ENCODE measurements at regions of chr18 and their contacts with region 1.

Region 1: DNA sequence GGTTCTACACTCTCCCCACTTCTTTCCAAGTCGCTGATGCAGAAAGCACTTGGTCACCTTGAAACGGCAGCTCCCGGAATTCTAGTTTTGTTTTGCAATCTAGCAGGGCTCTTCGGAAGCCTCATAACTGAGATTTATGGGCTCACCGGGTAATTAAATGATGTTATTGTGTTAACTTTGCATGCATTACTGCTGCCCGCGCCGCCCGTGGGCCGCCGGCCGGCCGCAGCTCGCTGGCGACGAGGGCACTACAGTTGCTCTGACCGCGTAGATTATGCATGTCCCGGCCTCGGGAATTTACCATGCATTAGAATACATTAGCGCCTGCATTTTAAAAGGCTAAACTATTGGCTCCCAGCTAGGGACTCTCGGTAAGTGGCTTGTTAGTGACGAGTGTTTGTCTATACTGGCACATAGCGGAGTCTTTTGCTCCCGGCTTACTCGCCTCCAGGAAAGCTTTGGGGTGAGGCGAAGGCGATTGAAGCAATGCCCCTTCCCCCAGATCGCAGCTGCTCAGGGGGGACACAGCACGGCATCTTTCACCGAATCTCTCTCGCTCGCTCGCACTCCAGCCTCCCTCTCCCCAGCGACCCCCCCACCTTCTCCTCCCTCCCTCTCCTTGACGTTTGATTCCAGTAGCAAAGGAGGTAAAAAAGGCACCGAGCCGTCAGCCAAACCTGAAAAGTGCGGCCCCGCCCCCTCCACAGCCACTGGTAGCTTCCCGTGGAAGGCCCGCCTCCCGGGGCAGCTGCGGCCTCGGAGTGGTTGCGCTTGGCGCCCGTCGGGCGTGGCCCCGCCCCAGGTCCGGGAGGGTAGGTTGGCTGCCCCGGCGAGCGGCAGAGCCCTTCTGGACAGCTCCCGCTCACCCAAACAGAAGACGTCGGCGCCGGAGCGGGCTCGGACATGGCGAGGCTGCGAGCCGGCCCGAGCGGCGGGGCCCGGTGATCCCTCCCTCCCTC is at the start of gene ONECUT2:
- DNase-seq: peak; percentile 89
- ATAC-seq: peak; percentile 89
- H3K4me3 Mint-ChIP-seq: peak within 1 kb of the TSS; percentile 64
- H3K27ac Mint-ChIP-seq: no peak within 1 kb of the TSS
- H3K4me1 Mint-ChIP-seq: peaks cover 53% of the 10 kb centered on the region
- H3K27me3 Mint-ChIP-seq: peaks cover 77% of the 10 kb centered on the region
- total RNA-seq, gene ONECUT2: under 0.01 TPM in 1 of 2 experiments, not detected in the other

Region 2: GRCh38 chr18:56789004-56789888 is 645.6 kb before region 1 on chr18:
- CTCF ChIA-PET with region 1: no interaction called
- POLR2A ChIA-PET with region 1: no interaction called
- intact Hi-C with region 1: loop called in 1 of 2 experiments (anchors 2 kb)
- DNase-seq: peak; percentile 57
- ATAC-seq: no peak
- H3K4me3 Mint-ChIP-seq: no peak overlapping the region
- H3K27ac Mint-ChIP-seq: no peak overlapping the region
- H3K4me1 Mint-ChIP-seq: no peaks in the 10 kb centered on the region
- H3K27me3 Mint-ChIP-seq: no peaks in the 10 kb centered on the region

Region 3: GRCh38 chr18:56869189-56869777 is 565.5 kb before region 1 on chr18:
- CTCF ChIA-PET with region 1: no interaction called
- POLR2A ChIA-PET with region 1: no interaction called
- intact Hi-C with region 1: loop called (anchors 2 to 10 kb)
- DNase-seq: peak; percentile 11
- ATAC-seq: no peak
- H3K4me3 Mint-ChIP-seq: no peak overlapping the region
- H3K27ac Mint-ChIP-seq: no peak overlapping the region
- H3K4me1 Mint-ChIP-seq: peaks cover 15% of the 10 kb centered on the region
- H3K27me3 Mint-ChIP-seq: no peaks in the 10 kb centered on the region

Region 4: DNA sequence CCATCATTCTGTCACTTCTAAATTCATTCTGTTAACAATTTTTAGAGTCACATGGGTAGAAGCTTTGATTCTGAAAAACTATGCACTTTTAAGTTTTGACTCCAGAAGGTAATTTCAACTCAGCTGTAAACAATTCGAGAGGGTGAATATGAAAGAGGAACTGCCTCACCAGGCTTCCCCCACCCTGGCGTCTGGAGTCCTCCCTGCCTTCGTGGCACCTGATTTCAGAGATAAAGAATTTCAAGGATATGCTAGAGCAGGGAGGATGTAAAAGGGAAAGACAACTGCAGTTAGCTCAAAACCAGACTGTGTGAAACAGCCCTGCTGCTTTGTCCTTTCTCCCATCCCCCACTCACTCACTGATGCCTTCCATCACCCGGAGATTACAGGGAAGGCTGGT is 41.1 kb after region 1 on chr18:
- CTCF ChIA-PET with region 1: no interaction called
- POLR2A ChIA-PET with region 1: no interaction called
- intact Hi-C with region 1: no loop called
- DNase-seq: no peak
- ATAC-seq: no peak
- H3K4me3 Mint-ChIP-seq: no peak overlapping the region
- H3K27ac Mint-ChIP-seq: no peak overlapping the region
- H3K4me1 Mint-ChIP-seq: no peaks in the 10 kb centered on the region
- H3K27me3 Mint-ChIP-seq: peaks cover 16% of the 10 kb centered on the region